Activated CD4-positive, alpha-beta T cell treated with anti-CD3 and anti-CD28 coated beads, Interleukin-2, amount 10 ng/mL, durations not matched to agents 24 days and 14 days (primary cell): ENCODE measurements at regions of chr2 and their contacts with region 1.

Region 1: GRCh38 chr2:164910101-164910899 is 45.0 kb downstream of the SLC38A11 start:
- DNase-seq: peak; percentile 79
- H3K4me3 Mint-ChIP-seq: no peak overlapping the region
- H3K27ac Mint-ChIP-seq: no peak overlapping the region
- H3K4me1 Mint-ChIP-seq: peaks cover 12% of the 10 kb centered on the region
- H3K27me3 Mint-ChIP-seq: peaks cover 10% of the 10 kb centered on the region

Region 2: GRCh38 chr2:164164602-164165001 is 745.7 kb before region 1 on chr2:
- intact Hi-C with region 1: no loop called
- DNase-seq: no peak
- H3K4me3 Mint-ChIP-seq: no peak overlapping the region
- H3K27ac Mint-ChIP-seq: no peak overlapping the region
- H3K4me1 Mint-ChIP-seq: no peaks in the 10 kb centered on the region
- H3K27me3 Mint-ChIP-seq: no peaks in the 10 kb centered on the region

Region 3: DNA sequence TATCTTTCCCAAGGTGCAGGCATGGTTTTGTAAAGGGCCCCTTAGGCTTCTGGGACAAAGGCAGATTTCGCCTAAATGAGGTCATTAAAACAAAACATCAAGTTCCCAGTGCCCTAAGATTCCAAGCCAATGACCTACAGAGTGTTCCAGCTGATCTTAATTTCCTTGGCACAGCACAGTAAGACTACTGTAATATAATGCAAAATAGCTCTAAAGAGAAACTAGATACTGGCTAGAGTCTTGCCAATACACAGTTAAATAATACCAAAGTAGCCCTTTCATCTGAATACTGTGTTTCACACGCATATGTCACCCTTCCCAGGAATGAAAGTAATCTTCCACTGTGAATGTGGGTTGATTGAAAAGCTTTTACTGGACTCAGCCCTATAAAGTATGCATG is 303.7 kb before region 1 on chr2:
- intact Hi-C with region 1: no loop called
- DNase-seq: no peak
- H3K4me3 Mint-ChIP-seq: no peak overlapping the region
- H3K27ac Mint-ChIP-seq: no peak overlapping the region
- H3K4me1 Mint-ChIP-seq: no peaks in the 10 kb centered on the region
- H3K27me3 Mint-ChIP-seq: no peaks in the 10 kb centered on the region

Region 4: DNA sequence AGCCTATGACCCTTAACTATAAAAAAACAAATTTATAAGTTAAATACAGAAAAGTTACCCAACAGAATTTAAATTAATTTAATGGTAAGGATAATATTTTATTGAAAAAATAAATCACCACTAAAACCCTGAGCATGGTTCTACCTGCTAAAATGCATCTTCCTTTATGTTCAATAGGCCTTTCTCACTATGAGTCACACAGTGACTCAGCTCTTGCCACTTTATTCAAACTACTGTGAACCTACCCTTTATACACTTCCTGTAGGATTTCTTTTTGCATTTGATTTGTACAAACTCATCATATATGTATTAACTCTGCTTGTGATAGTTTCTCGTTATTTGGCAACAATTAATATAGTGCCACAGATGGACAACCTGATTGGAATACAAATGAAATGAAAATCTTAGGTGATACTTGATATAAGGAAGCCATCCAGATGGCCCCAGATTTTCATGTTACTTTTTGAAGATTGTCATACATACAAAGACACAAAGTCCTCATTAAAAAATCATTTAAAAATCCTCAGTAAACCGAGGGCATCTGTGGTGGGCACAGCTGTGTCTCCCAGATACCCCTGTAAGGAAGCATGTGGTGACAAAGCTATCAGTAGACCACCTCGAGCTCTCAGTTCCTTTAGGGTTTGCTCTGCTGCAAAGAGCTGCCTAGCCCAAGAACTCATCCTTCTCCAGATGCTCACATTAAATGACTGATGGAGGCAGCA is 13.5 kb before region 1 on chr2:
- intact Hi-C with region 1: loop called (anchors 1 kb)
- DNase-seq: peak; percentile 64
- H3K4me3 Mint-ChIP-seq: no peak overlapping the region
- H3K27ac Mint-ChIP-seq: no peak overlapping the region
- H3K4me1 Mint-ChIP-seq: peaks cover 8% of the 10 kb centered on the region
- H3K27me3 Mint-ChIP-seq: peaks cover 12% of the 10 kb centered on the region

Region 5: DNA sequence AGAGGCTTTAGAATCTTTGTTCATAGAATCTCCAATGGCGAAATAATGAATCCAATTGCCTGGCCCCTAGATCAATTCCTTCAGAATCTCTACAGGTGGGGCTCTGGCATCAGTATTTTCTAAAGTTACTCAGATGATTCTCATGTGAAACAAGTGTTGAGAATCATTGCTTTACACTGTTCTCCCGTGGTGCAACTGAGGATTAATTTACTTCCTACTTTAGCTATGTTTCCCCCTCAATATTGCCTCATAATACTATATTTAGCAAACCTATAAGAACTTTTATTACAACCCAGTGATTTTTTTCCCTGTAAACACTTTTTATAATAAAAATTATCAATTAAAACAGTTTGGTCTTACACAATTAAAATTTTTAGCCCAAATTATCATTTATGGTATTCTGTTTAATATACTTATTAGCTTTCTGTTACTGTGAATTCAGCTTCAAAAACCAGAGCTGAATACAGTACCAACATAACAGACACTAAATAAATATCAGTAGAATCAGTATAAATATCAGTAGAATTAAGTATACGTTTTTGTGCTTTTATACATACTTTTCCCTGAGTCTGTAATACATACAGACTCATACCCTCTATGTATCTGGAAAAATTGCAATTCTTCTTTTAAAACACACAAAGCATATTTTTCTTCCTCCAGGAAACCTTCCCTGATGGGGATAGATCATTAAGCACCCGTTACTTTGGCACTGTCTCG is 24.3 kb after region 1 on chr2:
- intact Hi-C with region 1: no loop called
- DNase-seq: no peak
- H3K4me3 Mint-ChIP-seq: no peak overlapping the region
- H3K27ac Mint-ChIP-seq: no peak overlapping the region
- H3K4me1 Mint-ChIP-seq: no peaks in the 10 kb centered on the region
- H3K27me3 Mint-ChIP-seq: peaks cover 11% of the 10 kb centered on the region